ENCODE measurements at regions of chr16 and their contacts with region 1.

Region 1: DNA sequence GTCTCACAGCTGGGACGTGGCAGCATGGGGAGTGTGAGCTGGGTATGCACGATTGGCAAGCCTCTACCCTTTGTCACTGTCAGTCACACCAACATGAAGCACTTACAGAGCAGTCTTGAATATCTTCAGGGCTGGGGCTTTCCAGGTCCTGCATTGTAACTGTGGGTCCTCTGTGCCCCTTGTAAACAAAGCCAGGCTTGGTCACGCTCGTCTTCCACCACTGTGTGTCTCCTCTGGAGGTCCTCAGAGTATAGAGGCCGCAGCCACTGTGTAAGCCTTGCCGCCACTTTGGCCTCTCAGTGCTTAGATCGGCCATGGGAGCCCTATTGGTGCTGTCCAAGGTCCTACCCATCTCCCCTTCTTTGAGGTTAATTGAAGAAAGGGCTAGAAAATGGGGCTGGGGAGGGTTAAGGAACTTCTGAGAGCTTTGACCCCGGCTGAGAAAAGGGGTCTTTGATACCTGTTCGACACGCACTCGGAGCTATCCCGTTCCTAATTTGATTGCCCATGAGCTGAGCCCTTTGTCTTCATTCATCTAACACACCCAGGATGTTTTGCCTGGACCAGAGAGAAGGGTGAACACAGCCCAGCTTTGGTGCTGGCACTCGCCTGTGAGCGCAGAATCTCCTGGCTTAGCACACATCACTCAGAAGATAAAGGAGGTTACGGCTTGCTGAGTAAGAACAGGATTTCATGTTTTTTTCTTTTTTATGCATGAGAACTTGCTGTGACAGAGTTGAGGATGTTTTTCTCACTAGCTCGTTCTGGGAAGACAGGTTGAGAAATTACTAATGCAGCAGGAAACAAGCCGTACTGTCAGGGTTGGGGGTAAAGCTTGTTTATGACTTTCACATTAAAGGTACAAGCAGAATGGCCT is 267.9 kb downstream of the CPPED1 start:
- DNase-seq: peak; percentile 79
- ATAC-seq: peak; percentile 72
- H3K4me3 Mint-ChIP-seq: peak overlapping the region; percentile 54
- H3K27ac Mint-ChIP-seq: peak overlapping the region; percentile 95
- H3K4me1 Mint-ChIP-seq: peaks cover 97% of the 10 kb centered on the region
- H3K27me3 Mint-ChIP-seq: no peaks in the 10 kb centered on the region

Region 2: DNA sequence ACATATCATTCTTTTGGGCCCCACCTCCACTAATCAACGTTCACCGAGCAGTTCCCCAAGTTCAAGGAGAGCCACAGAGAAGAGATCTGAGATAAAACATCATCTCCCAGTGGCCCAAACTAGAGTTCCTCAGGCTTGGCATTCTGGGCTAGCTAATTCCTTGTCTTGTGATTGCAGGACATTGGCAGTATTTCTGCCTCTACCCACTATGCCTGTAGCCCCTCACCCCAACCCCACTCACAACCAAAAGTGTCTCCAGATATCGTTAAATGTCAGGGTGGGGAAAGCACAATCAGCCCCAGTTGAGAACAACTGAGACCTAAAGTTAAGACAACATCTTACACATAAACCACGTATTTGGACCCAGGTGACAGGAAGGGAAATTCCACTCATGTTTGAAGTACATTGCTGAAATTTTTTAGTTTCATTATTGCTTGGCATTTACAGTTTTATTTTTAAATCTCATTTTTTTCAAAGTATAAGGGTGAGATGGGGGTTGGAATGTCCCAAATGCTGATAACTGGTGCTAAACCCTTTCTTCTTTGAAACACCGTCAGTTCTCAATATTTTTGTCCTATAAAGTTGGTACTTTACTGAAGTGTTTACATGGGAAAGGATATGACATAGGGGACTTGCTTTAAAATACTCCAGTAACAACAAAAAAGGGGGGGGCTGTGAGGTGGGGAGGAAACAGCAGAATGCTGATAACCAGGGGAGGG is 752.3 kb before region 1 on chr16:
- CTCF ChIA-PET with region 1: no interaction called
- POLR2A ChIA-PET with region 1: no interaction called
- intact Hi-C with region 1: loop called in 1 of 2 experiments (anchors 5 kb)
- DNase-seq: peak; percentile 65
- ATAC-seq: peak; percentile 80
- H3K4me3 Mint-ChIP-seq: peak overlapping the region; percentile 74
- H3K27ac Mint-ChIP-seq: peak overlapping the region; percentile 97
- H3K4me1 Mint-ChIP-seq: peaks cover 74% of the 10 kb centered on the region
- H3K27me3 Mint-ChIP-seq: no peaks in the 10 kb centered on the region

Region 3: GRCh38 chr16:12089492-12090150 is 446.2 kb before region 1 on chr16:
- CTCF ChIA-PET with region 1: interaction called, 3 read pairs
- POLR2A ChIA-PET with region 1: no interaction called
- intact Hi-C with region 1: loop called in 1 of 2 experiments (anchors 10 kb)
- DNase-seq: peak; percentile 71
- ATAC-seq: peak; percentile 96
- H3K4me3 Mint-ChIP-seq: peak overlapping the region; percentile 64
- H3K27ac Mint-ChIP-seq: peak overlapping the region; percentile 89
- H3K4me1 Mint-ChIP-seq: peaks cover 40% of the 10 kb centered on the region
- H3K27me3 Mint-ChIP-seq: no peaks in the 10 kb centered on the region

Region 4: DNA sequence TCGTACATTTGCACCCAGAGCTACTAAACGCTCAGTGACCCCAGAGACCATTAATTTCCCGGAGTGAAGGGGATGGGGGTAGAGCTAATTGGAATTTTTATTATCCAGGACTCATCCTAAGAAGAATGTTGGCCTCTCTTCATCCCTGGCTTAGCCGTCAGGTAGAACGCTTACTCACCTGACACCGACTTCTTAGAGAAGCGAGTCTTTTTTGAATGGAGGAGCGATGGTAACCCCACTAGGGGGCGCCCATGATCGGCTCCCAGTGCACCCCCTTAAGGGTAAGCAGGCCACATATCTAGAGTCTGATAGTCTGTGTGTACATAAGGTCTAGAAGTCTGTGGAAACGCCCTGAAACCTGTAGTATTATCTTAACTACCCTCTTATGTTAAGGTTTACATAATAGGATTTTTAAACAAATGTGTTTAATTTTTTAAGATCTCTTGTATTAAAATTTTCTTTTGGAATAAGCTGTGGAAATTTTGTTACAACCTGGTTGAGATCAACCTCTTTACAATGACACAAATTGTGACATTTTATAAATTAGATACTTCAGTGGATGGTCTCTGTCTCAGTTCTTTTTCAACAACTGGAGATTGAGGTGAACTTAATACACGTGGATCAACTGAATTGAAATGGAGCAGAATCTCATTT is 38.1 kb after region 1 on chr16:
- CTCF ChIA-PET with region 1: interaction called, 7 read pairs
- POLR2A ChIA-PET with region 1: no interaction called
- intact Hi-C with region 1: loop called in 1 of 2 experiments (anchors 1 kb)
- DNase-seq: peak; percentile 89
- ATAC-seq: peak; percentile 91
- H3K4me3 Mint-ChIP-seq: no peak overlapping the region
- H3K27ac Mint-ChIP-seq: peak overlapping the region; percentile 31
- H3K4me1 Mint-ChIP-seq: peaks cover 12% of the 10 kb centered on the region
- H3K27me3 Mint-ChIP-seq: no peaks in the 10 kb centered on the region

Region 5: GRCh38 chr16:12646490-12647274 is 110.9 kb after region 1 on chr16:
- CTCF ChIA-PET with region 1: interaction called, 3 read pairs
- POLR2A ChIA-PET with region 1: no interaction called
- intact Hi-C with region 1: loop called in 1 of 2 experiments (anchors 1 kb)
- DNase-seq: peak; percentile 56
- ATAC-seq: peak; percentile 79
- H3K4me3 Mint-ChIP-seq: peak overlapping the region; percentile 37
- H3K27ac Mint-ChIP-seq: peak overlapping the region; percentile 92
- H3K4me1 Mint-ChIP-seq: peaks cover 22% of the 10 kb centered on the region
- H3K27me3 Mint-ChIP-seq: peaks cover 4% of the 10 kb centered on the region

Measured in activated CD4-positive, alpha-beta T cell treated with anti-CD3 and anti-CD28 coated beads for 36 hours (primary cell).